ENCODE measurements at regions of chr2 and their contacts with region 1.

Region 1: DNA sequence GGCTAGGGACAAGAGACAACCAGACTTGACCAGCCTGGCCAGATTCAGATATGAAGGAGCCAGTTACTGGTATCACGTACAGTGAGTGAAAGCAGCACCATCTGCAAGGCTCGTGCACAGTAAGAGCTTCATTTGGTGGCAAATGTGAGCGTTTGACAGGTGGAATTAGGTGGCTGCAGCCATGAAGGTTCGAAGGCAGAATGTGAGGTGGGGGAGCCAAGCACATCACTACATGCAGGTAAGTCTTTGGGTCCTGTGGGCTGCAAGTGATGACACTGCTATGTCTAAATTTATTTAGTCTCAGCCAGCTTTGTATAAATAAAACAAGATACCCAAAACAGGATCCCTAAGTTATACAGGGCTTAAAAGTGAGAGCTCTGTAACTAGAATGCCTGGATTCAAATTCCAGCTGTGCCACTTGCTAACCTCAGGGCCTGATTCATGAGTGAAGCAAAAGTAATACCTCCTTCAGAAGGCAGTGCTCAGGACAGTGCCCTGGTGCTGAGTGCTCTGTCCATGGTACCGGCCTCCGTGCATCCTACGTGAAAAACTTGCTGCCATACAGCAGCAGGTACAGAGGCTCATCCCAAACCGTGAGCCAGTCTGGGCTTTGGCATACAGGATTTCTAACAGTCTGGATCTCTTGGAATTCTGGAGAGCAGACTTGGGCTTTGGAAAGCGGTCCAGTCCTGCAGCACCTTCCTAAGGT is 18.6 kb downstream of the DDX18 start:
- DNase-seq: no peak
- H3K4me3 Mint-ChIP-seq: no peak overlapping the region
- H3K27ac Mint-ChIP-seq: no peak overlapping the region
- H3K4me1 Mint-ChIP-seq: no peaks in the 10 kb centered on the region
- H3K27me3 Mint-ChIP-seq: no peaks in the 10 kb centered on the region
- CTCF ChIP-seq: no peak

Region 2: DNA sequence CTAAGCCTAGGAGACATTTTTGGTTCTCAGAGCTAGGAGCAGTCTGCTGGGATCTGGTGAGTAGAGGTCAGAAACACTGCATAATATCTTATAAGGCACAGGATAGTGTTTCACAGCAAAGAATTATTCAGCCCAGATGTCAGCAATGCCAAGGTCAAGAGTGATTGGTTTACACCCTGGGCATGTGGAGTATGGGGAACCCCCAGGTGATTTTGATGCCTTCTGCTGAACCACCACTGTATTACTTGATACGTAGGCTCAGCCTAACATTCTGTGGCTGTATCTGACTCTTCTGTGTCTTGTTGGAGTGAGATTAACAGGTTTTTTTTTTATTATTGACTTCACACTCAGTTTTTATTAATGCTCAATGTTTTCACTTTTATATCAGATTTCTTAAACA is 12.6 kb before region 1 on chr2:
- CTCF ChIA-PET with region 1: no interaction called
- intact Hi-C with region 1: no loop called
- DNase-seq: no peak
- H3K4me3 Mint-ChIP-seq: no peak overlapping the region
- H3K27ac Mint-ChIP-seq: no peak overlapping the region
- H3K4me1 Mint-ChIP-seq: peaks cover 7% of the 10 kb centered on the region
- H3K27me3 Mint-ChIP-seq: no peaks in the 10 kb centered on the region
- CTCF ChIP-seq: no peak

Region 3: GRCh38 chr2:117875786-117876185 is 42.7 kb after region 1 on chr2:
- CTCF ChIA-PET with region 1: no interaction called
- intact Hi-C with region 1: loop called (anchors 1 kb)
- DNase-seq: no peak
- H3K4me3 Mint-ChIP-seq: no peak overlapping the region
- H3K27ac Mint-ChIP-seq: no peak overlapping the region
- H3K4me1 Mint-ChIP-seq: no peaks in the 10 kb centered on the region
- H3K27me3 Mint-ChIP-seq: peaks cover 69% of the 10 kb centered on the region
- CTCF ChIP-seq: no peak